ENCODE measurements at regions of chr1 and their contacts with region 1.

Region 1: DNA sequence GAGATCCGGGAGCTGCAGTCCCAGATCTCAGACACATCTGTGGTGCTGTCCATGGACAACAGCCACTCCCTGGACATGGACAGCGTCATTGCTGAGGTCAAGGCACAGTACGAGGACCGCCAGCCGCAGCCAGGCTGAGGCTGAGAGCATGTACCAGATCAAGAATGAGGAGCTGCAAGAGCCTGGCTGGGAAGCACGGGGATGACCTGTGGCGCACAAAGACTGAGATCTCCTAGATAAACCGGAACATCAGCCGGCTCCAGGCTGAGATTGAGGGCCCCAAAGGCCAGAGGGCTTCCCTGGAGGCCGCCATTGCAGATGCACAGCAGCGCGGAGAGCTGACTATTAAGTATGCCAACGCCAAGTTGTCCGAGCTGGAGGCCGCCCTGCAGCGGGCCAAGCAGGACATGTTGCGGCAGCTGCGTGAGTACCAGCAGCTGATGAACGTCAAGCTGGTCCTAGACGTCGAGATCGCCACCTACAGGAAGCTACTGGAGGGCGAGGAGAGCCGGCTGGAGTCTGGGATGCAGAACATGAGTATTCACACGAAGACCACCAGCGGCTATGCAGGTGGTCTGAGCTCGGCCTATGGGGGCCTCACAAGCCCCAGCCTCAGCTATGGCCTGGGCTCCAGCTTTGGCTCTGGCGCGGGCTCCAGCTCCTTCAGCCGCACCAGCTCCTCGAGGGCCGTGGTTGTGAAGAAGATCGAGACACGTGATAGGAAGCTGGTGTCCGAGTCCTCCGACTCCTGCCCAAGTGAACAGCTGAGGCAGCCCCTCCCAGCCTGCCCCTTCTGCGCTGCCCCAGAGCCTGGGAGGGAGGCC is 25.5 kb downstream of the ETV3L start:
- DNase-seq: peak; percentile 66 to 70
- ATAC-seq: peak in 5 of 8 donors; percentile 23 to 79 (median 64)
- H3K4me3 ChIP-seq: peak overlapping the region in 6 of 10 donors; percentile 6 to 47 (median 20)
- H3K27ac ChIP-seq: no peak overlapping the region
- H3K4me1 ChIP-seq: peaks cover 0 to 8% (median 4%) of the 10 kb centered on the region in 9 donors
- H3K27me3 ChIP-seq: peaks cover 0 to 57% (median 4%) of the 10 kb centered on the region in 7 donors
- CTCF ChIP-seq: peak; percentile 36 to 84 (median 72)

Region 2: DNA sequence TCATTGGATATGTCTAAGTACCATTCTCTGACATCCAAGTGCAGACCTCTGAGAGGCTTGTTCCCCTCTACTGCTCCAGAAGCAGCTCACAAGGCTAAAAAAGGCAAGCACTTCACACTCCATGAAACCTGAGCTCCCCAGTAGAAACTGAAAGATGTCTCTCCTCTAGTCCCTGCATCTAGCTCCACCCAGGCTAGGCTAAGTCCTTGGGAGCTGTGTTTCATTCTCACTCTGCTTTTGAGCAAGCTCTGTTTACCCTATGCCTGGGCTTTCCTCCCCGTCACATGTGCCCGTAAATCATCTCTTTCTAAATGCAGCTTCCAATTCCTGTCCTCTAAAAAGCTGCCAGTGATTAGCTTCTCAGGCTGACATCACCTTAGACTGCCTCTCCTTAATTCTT is 114.7 kb before region 1 on chr1:
- intact Hi-C with region 1: no loop called
- DNase-seq: no peak
- ATAC-seq: no peak
- H3K4me3 ChIP-seq: no peak overlapping the region
- H3K27ac ChIP-seq: no peak overlapping the region
- H3K4me1 ChIP-seq: peaks cover 0 to 17% (median 0%) of the 10 kb centered on the region in 9 donors
- H3K27me3 ChIP-seq: no peaks in the 10 kb centered on the region
- CTCF ChIP-seq: no peak

Region 3: DNA sequence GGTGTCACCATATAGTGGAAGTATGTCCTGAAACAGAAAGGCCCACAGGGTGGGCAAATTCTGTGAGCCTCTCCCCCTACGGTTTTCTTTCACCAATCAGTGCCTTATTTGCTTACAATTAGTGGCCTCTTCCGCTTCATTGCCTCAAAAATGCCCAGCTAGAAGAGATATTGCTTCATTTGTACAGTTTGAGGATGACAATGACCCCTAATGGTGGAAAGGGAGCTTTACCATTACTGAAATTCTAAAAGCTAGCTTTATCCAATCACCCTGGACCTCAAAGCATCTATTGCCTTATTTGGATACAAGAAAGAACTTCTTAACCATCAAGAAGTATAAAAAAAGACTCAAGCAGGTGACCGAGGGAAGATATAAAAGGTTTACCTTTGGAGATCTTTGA is 104.1 kb before region 1 on chr1:
- intact Hi-C with region 1: loop called in 1 of 10 experiments (anchors 10 kb)
- DNase-seq: no peak
- ATAC-seq: no peak
- H3K4me3 ChIP-seq: no peak overlapping the region
- H3K27ac ChIP-seq: no peak overlapping the region
- H3K4me1 ChIP-seq: no peaks in the 10 kb centered on the region
- H3K27me3 ChIP-seq: no peaks in the 10 kb centered on the region
- CTCF ChIP-seq: peak in 1 of 9 donors; percentile 3

Region 4: GRCh38 chr1:156980551-156980950 is 93.6 kb before region 1 on chr1:
- intact Hi-C with region 1: loop called in 4 of 10 experiments (anchors 5 to 10 kb)
- DNase-seq: no peak
- ATAC-seq: peak in 2 of 8 donors; percentile 55 to 61
- H3K4me3 ChIP-seq: no peak overlapping the region
- H3K27ac ChIP-seq: no peak overlapping the region
- H3K4me1 ChIP-seq: peaks cover 0 to 13% (median 4%) of the 10 kb centered on the region in 9 donors
- H3K27me3 ChIP-seq: no peaks in the 10 kb centered on the region
- CTCF ChIP-seq: no peak

Region 5: GRCh38 chr1:156987715-156988114 is 86.4 kb before region 1 on chr1:
- intact Hi-C with region 1: loop called in 3 of 10 experiments (anchors 5 to 10 kb)
- DNase-seq: no peak
- ATAC-seq: no peak
- H3K4me3 ChIP-seq: no peak overlapping the region
- H3K27ac ChIP-seq: no peak overlapping the region
- H3K4me1 ChIP-seq: peaks cover 0 to 9% (median 0%) of the 10 kb centered on the region in 9 donors
- H3K27me3 ChIP-seq: no peaks in the 10 kb centered on the region
- CTCF ChIP-seq: no peak

Measured in heart right ventricle (tissue), 16 donors.